ENCODE measurements at regions of chr1 and their contacts with region 1.

Region 1: DNA sequence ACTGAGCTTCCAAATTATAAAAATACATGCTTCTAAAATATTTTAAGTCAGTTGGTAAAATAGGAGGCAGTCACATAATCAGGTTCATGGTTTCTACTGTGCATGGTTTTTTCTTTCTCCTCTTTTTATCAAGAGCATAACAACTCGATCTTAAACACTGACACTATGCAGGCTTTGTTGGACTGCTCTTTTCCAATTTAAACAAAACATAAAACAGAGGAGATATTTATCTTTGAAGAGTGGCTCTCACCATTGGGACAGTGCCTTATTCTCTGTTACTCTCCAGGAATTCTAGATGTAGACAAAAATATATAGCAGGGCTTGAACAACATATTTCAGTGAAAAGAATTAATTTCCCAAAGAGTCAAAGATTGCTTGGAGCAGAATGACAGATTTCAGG is 883.5 kb upstream of the ADGRL2 start:
- DNase-seq: no peak
- ATAC-seq: no peak
- H3K4me3 ChIP-seq: no peak overlapping the region
- H3K27ac ChIP-seq: no peak overlapping the region
- H3K4me1 ChIP-seq: no peaks in the 10 kb centered on the region
- H3K27me3 ChIP-seq: no peaks in the 10 kb centered on the region
- CTCF ChIP-seq: no peak
- POLR2A ChIP-seq: no peak

Region 2: GRCh38 chr1:80799457-80799856 is 117.8 kb before region 1 on chr1:
- intact Hi-C with region 1: no loop called
- DNase-seq: no peak
- ATAC-seq: no peak
- H3K4me3 ChIP-seq: no peak overlapping the region
- H3K27ac ChIP-seq: no peak overlapping the region
- H3K4me1 ChIP-seq: no peaks in the 10 kb centered on the region
- H3K27me3 ChIP-seq: no peaks in the 10 kb centered on the region
- CTCF ChIP-seq: no peak
- POLR2A ChIP-seq: no peak

Region 3: GRCh38 chr1:80973106-80973505 is 55.9 kb after region 1 on chr1:
- intact Hi-C with region 1: loop called in 1 of 10 experiments (anchors 2 kb)
- DNase-seq: no peak
- ATAC-seq: no peak
- H3K4me3 ChIP-seq: no peak overlapping the region
- H3K27ac ChIP-seq: no peak overlapping the region
- H3K4me1 ChIP-seq: no peaks in the 10 kb centered on the region
- H3K27me3 ChIP-seq: no peaks in the 10 kb centered on the region
- CTCF ChIP-seq: no peak
- POLR2A ChIP-seq: no peak